ENCODE measurements at regions of chr15 and their contacts with region 1.

Region 1: GRCh38 chr15:100973351-100974111 is 54.4 kb downstream of the LRRK1 start:
- DNase-seq: no peak
- ATAC-seq: no peak

Region 2: GRCh38 chr15:100721770-100722550 is 251.6 kb before region 1 on chr15:
- intact Hi-C with region 1: loop called (anchors 10 kb)
- DNase-seq: peak; percentile 71
- ATAC-seq: peak; percentile 96

Region 3: GRCh38 chr15:100821327-100821726 is 152.2 kb before region 1 on chr15:
- intact Hi-C with region 1: no loop called
- DNase-seq: no peak
- ATAC-seq: no peak